Activated naive CD4-positive, alpha-beta T cell treated with anti-CD3 and anti-CD28 coated beads for 36 hours (primary cell): ENCODE measurements at regions of chr6 and their contacts with region 1.

Region 1: GRCh38 chr6:155530219-155530834 is 74.7 kb upstream of the NOX3 start:
- DNase-seq: peak; percentile 47
- H3K4me3 Mint-ChIP-seq: no peak overlapping the region
- H3K27ac Mint-ChIP-seq: no peak overlapping the region
- H3K4me1 Mint-ChIP-seq: peaks cover 22% of the 10 kb centered on the region
- H3K27me3 Mint-ChIP-seq: no peaks in the 10 kb centered on the region

Region 2: GRCh38 chr6:154928325-154928922 is 601.9 kb before region 1 on chr6:
- CTCF ChIA-PET with region 1: no interaction called
- intact Hi-C with region 1: loop called (anchors 10 kb)
- DNase-seq: peak; percentile 88
- H3K4me3 Mint-ChIP-seq: no peak overlapping the region
- H3K27ac Mint-ChIP-seq: no peak overlapping the region
- H3K4me1 Mint-ChIP-seq: peaks cover 3% of the 10 kb centered on the region
- H3K27me3 Mint-ChIP-seq: no peaks in the 10 kb centered on the region

Region 3: GRCh38 chr6:155050311-155050710 is 480.0 kb before region 1 on chr6:
- CTCF ChIA-PET with region 1: no interaction called
- intact Hi-C with region 1: no loop called
- DNase-seq: peak; percentile 63
- H3K4me3 Mint-ChIP-seq: no peak overlapping the region
- H3K27ac Mint-ChIP-seq: peak overlapping the region; percentile 79
- H3K4me1 Mint-ChIP-seq: peaks cover 25% of the 10 kb centered on the region
- H3K27me3 Mint-ChIP-seq: peaks cover 8% of the 10 kb centered on the region

Region 4: GRCh38 chr6:155327326-155328073 is 202.8 kb before region 1 on chr6:
- CTCF ChIA-PET with region 1: interaction called, 21 read pairs
- intact Hi-C with region 1: loop called (anchors 1 kb)
- DNase-seq: peak; percentile 81
- H3K4me3 Mint-ChIP-seq: no peak overlapping the region
- H3K27ac Mint-ChIP-seq: peak overlapping the region; percentile 57
- H3K4me1 Mint-ChIP-seq: peaks cover 28% of the 10 kb centered on the region
- H3K27me3 Mint-ChIP-seq: no peaks in the 10 kb centered on the region

Region 5: DNA sequence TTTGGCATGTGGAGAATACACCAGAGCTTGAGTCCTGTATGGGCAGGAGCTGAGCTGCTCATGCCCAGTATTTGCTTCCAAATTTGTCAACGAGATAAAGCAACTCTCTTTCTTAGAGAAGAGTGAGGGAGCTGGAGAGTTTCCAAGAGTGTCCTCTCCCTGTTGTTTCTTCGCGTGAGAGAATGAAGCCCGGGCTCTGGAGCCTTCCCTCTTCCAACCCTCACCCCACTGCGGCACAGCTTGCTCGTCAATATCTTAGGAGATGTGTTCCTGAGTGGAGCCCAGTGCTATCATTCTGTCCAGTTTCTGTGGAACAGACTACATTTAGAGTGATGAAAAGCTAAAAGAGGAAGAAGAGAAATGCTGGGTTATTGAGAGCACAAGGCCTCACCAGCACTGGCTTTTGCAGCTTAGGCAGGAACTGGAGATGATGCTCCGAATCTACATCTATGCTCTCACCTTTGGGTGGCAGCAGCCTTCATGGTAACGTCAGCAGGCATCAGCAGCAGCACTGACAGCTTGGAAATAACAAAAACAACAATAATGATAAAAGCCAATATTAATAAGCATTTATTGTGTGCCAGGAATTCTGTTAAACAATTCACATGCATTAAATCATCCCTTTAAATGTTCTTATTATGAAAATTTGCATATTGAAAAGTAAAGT is 149.5 kb before region 1 on chr6:
- CTCF ChIA-PET with region 1: no interaction called
- intact Hi-C with region 1: loop called (anchors 1 kb)
- DNase-seq: peak; percentile 24
- H3K4me3 Mint-ChIP-seq: no peak overlapping the region
- H3K27ac Mint-ChIP-seq: no peak overlapping the region
- H3K4me1 Mint-ChIP-seq: peaks cover 8% of the 10 kb centered on the region
- H3K27me3 Mint-ChIP-seq: no peaks in the 10 kb centered on the region

Region 6: GRCh38 chr6:156250593-156250992 is 720.3 kb after region 1 on chr6:
- CTCF ChIA-PET with region 1: no interaction called
- intact Hi-C with region 1: loop called (anchors 10 kb)
- DNase-seq: peak; percentile 72
- H3K4me3 Mint-ChIP-seq: no peak overlapping the region
- H3K27ac Mint-ChIP-seq: peak overlapping the region; percentile 74
- H3K4me1 Mint-ChIP-seq: peaks cover 29% of the 10 kb centered on the region
- H3K27me3 Mint-ChIP-seq: no peaks in the 10 kb centered on the region